MCF 10A (cell line): ENCODE measurements at regions of chr4 and their contacts with region 1.

Region 1: DNA sequence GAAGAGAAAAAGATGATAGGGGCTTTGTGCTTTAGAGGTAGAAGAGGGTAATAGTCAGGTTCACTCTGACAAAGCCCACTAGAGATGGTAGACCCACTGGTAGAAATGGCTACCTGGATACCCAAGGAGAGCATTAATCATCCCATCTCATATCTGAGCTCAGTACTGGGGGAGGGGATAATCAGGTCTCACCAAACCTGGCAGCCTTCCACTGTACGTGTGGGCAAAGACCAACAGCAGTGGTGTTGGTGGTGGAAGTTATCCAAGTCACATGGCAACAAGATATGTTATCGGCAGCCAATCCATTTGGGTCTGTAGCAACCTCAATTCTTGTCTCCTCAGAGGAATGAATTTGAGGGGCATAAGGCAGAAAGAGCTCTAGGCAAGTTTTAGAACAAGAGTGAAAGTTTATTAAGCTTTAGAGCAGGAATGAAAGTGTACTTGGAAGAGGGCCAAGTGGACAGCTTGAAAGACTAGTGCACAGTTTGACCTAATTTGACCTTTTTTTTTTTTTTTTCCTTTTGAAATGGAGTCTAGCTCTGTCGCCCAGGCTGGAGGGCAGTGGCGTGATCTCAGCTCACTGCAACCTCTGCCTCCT is 67.0 kb upstream of the CXCL13 start:
- DNase-seq: peak; percentile 77
- H3K4me3 Mint-ChIP-seq: peak overlapping the region; percentile 55
- H3K27ac Mint-ChIP-seq: peak overlapping the region; percentile 87
- H3K4me1 Mint-ChIP-seq: peaks cover 29% of the 10 kb centered on the region
- H3K27me3 Mint-ChIP-seq: peaks cover 31% of the 10 kb centered on the region
- CTCF ChIP-seq: no peak

Region 2: DNA sequence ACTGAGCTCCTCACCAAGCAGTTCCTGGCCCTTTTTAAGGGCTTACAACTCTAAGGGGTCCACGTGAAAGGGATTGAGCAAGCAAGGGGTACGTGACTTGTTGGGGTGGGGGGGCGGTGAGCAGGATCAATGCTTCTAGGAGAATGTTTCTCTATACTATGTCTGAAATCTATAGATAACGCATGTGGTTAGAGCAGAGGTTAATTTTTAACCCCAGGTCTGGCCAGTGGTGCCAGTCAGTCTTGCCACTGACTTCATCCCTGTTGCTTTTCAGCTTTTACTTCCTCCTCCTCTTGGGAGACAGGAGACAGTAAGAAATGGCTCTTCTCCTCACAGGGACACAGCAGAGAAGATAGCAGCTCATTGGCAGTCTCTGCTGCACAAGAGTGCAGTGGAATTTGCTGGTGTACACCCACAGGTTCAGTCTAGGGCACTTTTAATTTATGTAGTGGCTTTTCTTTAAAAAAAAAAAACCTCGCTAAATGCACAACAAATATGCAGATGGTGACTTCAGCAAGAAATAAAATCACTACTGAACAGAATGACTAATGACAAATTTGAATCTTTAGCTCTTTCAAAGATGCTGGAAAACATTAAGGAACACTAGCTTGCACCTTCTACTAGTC is 191.2 kb before region 1 on chr4:
- CTCF ChIA-PET with region 1: no interaction called
- POLR2A ChIA-PET with region 1: no interaction called
- intact Hi-C with region 1: no loop called
- DNase-seq: no peak
- H3K4me3 Mint-ChIP-seq: no peak overlapping the region
- H3K27ac Mint-ChIP-seq: no peak overlapping the region
- H3K4me1 Mint-ChIP-seq: peaks cover 15% of the 10 kb centered on the region
- H3K27me3 Mint-ChIP-seq: no peaks in the 10 kb centered on the region
- CTCF ChIP-seq: no peak

Region 3: DNA sequence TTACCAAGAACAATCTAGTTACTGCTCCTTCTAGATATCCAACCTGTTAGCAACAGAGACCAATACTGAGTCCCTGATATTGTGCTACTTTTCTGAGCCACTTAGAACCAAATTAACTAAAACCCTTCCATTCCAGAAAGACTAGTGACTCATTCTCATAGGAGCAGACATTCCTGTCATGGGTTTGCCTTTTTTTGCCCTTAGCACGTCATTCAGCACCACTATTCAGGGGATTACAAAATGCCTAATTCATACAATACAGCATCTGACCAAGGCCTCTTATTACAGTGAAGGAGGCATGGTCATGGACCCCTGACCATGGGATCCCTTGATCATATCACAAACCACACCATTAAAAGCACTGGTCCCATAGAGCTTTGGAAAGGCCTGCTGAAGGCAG is 56.8 kb before region 1 on chr4:
- CTCF ChIA-PET with region 1: no interaction called
- POLR2A ChIA-PET with region 1: no interaction called
- intact Hi-C with region 1: loop called (anchors 5 kb)
- DNase-seq: peak; percentile 50
- H3K4me3 Mint-ChIP-seq: no peak overlapping the region
- H3K27ac Mint-ChIP-seq: peak overlapping the region; percentile 61
- H3K4me1 Mint-ChIP-seq: peaks cover 20% of the 10 kb centered on the region
- H3K27me3 Mint-ChIP-seq: no peaks in the 10 kb centered on the region
- CTCF ChIP-seq: no peak

Region 4: GRCh38 chr4:78079726-78080430 is 541.2 kb after region 1 on chr4:
- CTCF ChIA-PET with region 1: no interaction called
- POLR2A ChIA-PET with region 1: no interaction called
- intact Hi-C with region 1: no loop called
- DNase-seq: no peak
- H3K4me3 Mint-ChIP-seq: no peak overlapping the region
- H3K27ac Mint-ChIP-seq: no peak overlapping the region
- H3K4me1 Mint-ChIP-seq: no peaks in the 10 kb centered on the region
- H3K27me3 Mint-ChIP-seq: no peaks in the 10 kb centered on the region
- CTCF ChIP-seq: no peak